ENCODE measurements at regions of chr20 and their contacts with region 1.

Region 1: DNA sequence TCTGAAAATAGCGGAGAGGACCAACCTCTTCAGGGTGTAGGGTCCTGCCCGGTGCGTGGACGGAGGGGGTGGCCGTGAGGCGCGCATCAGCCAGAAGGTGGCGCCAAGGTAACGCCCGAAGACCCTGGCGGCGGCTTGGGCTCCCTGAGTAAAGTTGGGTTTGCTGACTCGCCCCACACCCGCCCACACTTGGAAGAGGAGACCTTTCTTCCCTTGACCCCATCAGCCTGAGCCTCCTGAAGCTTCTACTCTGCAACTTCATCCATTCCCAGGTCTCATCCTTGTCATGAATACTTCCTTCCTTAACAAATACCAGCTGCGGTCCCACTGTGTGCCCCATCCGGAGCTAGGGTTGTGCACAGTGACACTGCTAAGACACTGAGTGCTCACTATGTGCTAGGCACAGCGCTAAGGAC is 14.6 kb downstream of the CD40 start:
- DNase-seq: peak; percentile 86
- H3K4me3 Mint-ChIP-seq: no peak overlapping the region
- H3K27ac Mint-ChIP-seq: no peak overlapping the region
- H3K4me1 Mint-ChIP-seq: peaks cover 2% of the 10 kb centered on the region
- H3K27me3 Mint-ChIP-seq: peaks cover 30% of the 10 kb centered on the region

Region 2: GRCh38 chr20:46174469-46175128 is 41.9 kb after region 1 on chr20:
- intact Hi-C with region 1: loop called (anchors 1 kb)
- DNase-seq: peak; percentile 90
- H3K4me3 Mint-ChIP-seq: no peak overlapping the region
- H3K27ac Mint-ChIP-seq: no peak overlapping the region
- H3K4me1 Mint-ChIP-seq: no peaks in the 10 kb centered on the region
- H3K27me3 Mint-ChIP-seq: peaks cover 41% of the 10 kb centered on the region